ENCODE measurements at regions of chr11 and their contacts with region 1.

Region 1: DNA sequence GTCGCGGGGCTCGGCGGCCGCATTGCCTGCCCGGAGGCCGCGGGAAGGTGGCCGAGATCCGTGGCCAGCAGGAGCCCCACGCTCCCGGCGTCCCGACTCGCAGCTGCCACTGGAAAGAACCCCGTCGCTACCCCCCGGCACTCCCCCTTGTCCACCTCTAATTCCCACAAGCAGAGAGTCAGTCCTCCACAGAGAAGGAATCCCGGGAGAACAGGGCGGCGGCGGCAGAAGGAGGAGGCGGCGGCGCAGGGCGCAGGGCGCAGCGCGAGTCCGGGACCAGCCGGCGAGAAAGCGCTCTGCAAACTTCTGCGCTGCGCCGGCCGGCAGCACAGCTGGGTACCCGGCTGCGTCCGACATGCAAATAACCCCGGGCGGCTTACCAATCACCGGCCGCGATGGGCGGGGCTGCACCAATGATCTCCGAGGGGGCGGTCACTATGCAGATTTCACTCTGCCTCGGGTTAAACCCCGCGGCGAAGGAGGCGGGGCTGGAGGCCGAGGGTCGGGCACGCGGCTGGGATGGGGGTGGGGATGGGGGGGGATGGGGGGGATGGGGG is at the start of gene ABTB2:
- DNase-seq: peak; percentile 99
- H3K4me3 Mint-ChIP-seq: peak within 1 kb of the TSS; percentile 82
- H3K27ac Mint-ChIP-seq: peak within 1 kb of the TSS; percentile 82
- H3K4me1 Mint-ChIP-seq: peaks cover 45% of the 10 kb centered on the region
- H3K27me3 Mint-ChIP-seq: no peaks in the 10 kb centered on the region
- CTCF ChIP-seq: no peak
- total RNA-seq, gene ABTB2: 24.6 and 24.8 TPM in 2 replicates

Region 2: DNA sequence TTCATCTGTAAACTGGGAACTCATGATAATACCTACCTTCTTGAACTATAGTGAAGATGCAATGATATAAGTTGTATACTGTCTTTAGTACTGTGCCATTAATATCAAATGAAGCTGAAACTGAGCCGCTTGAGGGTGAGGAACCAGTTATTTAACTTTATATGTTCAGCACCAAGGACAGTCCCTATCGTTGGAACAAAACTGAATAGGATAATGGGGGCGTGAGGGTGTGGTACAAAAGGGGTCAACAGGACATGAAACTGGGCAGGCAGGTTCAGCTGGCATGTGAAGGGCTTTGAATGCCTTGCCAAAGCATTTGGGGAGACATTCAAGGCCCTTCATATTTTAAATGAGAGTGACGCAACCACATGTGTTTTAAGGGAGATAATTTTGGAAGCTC is 769.7 kb before region 1 on chr11:
- CTCF ChIA-PET with region 1: no interaction called
- intact Hi-C with region 1: no loop called
- DNase-seq: no peak
- H3K4me3 Mint-ChIP-seq: no peak overlapping the region
- H3K27ac Mint-ChIP-seq: no peak overlapping the region
- H3K4me1 Mint-ChIP-seq: no peaks in the 10 kb centered on the region
- H3K27me3 Mint-ChIP-seq: no peaks in the 10 kb centered on the region
- CTCF ChIP-seq: no peak

Region 3: GRCh38 chr11:33857933-33858371 is 499.8 kb before region 1 on chr11:
- CTCF ChIA-PET with region 1: no interaction called
- intact Hi-C with region 1: loop called (anchors 5 kb)
- DNase-seq: peak; percentile 78
- H3K4me3 Mint-ChIP-seq: no peak overlapping the region
- H3K27ac Mint-ChIP-seq: no peak overlapping the region
- H3K4me1 Mint-ChIP-seq: no peaks in the 10 kb centered on the region
- H3K27me3 Mint-ChIP-seq: peaks cover 88% of the 10 kb centered on the region
- CTCF ChIP-seq: peak; percentile 83

Region 4: GRCh38 chr11:34051349-34052035 is 306.3 kb before region 1 on chr11 and contains the start of gene CAPRIN1:
- CTCF ChIA-PET with region 1: no interaction called
- intact Hi-C with region 1: loop called (anchors 2 kb)
- DNase-seq: peak; percentile 96
- H3K4me3 Mint-ChIP-seq: peak within 1 kb of the TSS; percentile 99
- H3K27ac Mint-ChIP-seq: peak within 1 kb of the TSS; percentile 97
- H3K4me1 Mint-ChIP-seq: peaks cover 14% of the 10 kb centered on the region
- H3K27me3 Mint-ChIP-seq: no peaks in the 10 kb centered on the region
- CTCF ChIP-seq: no peak
- total RNA-seq, gene CAPRIN1: 268 and 273 TPM in 2 replicates

Region 5: GRCh38 chr11:34165518-34166277 is 192.1 kb before region 1 on chr11:
- CTCF ChIA-PET with region 1: no interaction called
- intact Hi-C with region 1: no loop called
- DNase-seq: no peak
- H3K4me3 Mint-ChIP-seq: no peak overlapping the region
- H3K27ac Mint-ChIP-seq: no peak overlapping the region
- H3K4me1 Mint-ChIP-seq: peaks cover 8% of the 10 kb centered on the region
- H3K27me3 Mint-ChIP-seq: no peaks in the 10 kb centered on the region
- CTCF ChIP-seq: no peak

Region 6: DNA sequence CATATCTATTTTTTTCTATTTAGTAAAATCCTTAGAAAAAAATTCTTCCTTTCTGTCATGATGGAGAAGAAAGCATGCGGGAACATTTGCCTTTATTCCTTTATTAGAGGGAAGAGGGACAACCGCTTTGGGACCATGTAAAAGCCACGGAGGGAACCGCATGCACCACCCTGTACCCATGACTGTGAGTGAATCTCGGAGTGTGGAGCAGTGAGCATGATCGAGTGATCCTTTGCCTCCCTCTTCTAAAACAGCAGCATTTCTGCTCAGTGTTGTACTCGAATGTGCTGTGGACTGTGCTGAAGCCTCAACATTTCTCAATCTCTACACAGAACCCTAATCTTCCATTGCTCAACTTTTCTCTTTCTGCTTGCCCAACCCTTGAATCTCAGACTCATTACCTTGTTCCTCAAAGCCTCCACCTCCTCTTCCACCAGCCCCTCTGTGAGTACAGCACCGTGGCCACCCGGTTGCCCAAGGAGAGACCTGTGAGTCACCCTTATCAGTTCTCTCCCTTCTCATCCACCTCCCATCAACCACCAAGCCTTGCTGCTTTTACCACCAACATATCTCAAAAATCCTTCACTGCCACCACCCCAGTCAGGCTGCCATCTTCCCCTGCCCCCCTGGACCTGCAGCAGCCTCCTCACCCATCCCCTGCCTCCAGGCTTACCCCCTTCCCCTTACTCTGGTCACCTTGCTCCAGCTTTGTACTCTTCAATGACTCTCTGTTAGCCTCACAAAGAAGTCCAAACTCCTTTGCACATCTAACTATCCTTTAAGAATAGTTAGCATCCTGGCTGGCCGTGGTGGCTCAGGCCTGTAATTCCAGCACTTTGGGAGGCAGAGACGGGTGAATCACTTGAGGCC is 149.3 kb before region 1 on chr11:
- CTCF ChIA-PET with region 1: interaction called, 9 read pairs
- intact Hi-C with region 1: loop called (anchors 10 kb)
- DNase-seq: peak; percentile 59
- H3K4me3 Mint-ChIP-seq: peak overlapping the region; percentile 1
- H3K27ac Mint-ChIP-seq: peak overlapping the region; percentile 16
- H3K4me1 Mint-ChIP-seq: peaks cover 50% of the 10 kb centered on the region
- H3K27me3 Mint-ChIP-seq: no peaks in the 10 kb centered on the region
- CTCF ChIP-seq: no peak

Region 7: DNA sequence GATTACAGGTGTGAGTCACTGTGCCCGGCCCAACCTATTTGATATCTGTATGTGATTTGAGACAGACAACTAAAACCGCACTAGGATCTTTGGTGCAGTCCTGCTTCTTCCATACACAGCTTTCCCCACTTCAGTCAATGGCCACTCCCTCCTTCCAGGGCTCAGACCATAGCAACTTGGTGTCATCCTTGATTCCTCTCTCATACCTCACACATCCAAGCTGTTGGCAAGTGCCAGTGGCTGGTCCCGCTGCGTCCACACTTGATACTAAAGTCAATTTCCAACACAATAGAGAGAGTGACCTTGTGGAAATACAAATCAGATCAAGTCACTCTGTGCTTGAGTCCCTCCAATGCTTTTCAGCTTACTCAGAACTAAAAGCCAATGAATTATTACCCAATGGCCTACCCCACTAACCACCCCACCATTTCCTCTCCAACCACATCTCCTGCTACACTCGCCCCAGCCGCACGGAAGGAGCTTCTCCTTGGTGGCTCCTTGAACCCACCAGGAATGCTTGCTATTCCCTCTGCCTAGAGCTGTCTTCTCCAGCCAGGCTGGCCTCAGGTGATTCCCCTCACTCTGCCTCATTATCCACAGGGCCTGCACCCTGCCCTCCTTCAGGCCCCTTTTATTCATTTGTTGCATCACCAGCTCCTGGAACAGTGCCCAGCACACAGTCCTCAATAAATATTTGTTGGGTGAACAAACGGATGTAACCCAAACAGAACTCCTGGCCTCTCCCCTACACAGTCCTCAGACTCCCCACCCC is 12.8 kb before region 1 on chr11:
- CTCF ChIA-PET with region 1: interaction called, 20 read pairs
- intact Hi-C with region 1: loop called (anchors 1 kb)
- DNase-seq: peak; percentile 82
- H3K4me3 Mint-ChIP-seq: peak overlapping the region; percentile 52
- H3K27ac Mint-ChIP-seq: peak overlapping the region; percentile 92
- H3K4me1 Mint-ChIP-seq: peaks cover 84% of the 10 kb centered on the region
- H3K27me3 Mint-ChIP-seq: no peaks in the 10 kb centered on the region
- CTCF ChIP-seq: no peak